PC-3 (cell line): ENCODE measurements at regions of chr1 and their contacts with region 1.

Region 1: DNA sequence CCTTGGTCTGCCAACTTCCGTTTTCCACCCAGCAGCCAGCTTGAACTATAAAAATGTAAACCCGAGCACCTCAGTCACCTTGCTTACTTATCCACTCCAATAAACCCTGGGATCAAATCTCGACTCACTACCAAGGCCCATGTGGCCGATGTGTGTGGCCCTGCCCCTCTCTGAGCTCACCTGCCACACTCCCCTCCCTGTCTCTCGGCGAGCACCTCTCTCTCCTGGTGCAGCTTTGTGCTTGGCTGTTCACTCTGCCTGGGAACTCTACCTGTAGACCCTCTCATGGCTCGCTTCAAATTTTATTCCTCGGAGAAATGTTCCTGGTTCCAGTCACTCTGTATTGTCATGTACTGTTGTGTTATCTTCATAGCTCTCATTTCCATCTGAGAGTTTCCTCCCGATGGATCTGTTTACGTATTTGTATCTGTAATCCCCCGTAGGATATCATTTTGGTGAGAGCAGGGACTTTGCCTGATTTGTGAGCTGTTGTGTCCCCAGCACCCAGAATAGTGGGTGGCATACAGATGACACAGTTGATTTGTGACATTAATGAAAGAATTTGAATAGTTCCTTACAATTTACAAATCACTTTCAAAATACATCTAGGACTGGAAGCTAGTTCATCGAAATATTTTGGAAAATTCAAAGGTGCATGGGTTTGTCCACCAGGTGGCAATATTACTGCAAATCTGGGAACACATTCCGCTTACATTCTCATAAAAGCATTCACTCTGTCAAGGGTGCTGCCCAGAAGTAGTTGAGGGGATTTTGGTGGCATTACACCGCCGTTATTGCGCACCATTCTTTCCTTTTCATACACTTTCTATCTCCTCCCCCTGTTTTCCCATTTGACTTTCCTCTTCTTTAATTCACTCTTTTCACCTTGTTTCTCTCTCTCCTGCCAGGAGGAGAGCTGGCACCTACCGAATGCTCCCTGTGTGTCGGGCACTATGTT is 95.3 kb downstream of the ABCA4 start:
- DNase-seq: peak; percentile 90
- ATAC-seq: peak; percentile 76
- H3K4me3 ChIP-seq: peak overlapping the region; percentile 79
- H3K27ac ChIP-seq: no peak overlapping the region
- H3K4me1 ChIP-seq: peaks cover 22% of the 10 kb centered on the region; the same call in 1 of the 2 replicates
- H3K27me3 ChIP-seq: no peaks in the 10 kb centered on the region
- CTCF ChIP-seq: peak; percentile 90

Region 2: GRCh38 chr1:93909146-93910050 is 116.3 kb before region 1 on chr1 and contains the start of gene GCLM:
- CTCF ChIA-PET with region 1: no interaction called
- POLR2A ChIA-PET with region 1: no interaction called
- intact Hi-C with region 1: loop called (anchors 5 kb)
- DNase-seq: peak; percentile 97
- ATAC-seq: peak; percentile 92
- H3K4me3 ChIP-seq: peak within 1 kb of the TSS; percentile 85
- H3K27ac ChIP-seq: peak within 1 kb of the TSS; percentile 70
- H3K4me1 ChIP-seq: peaks cover 33% of the 10 kb centered on the region
- H3K27me3 ChIP-seq: no peaks in the 10 kb centered on the region
- CTCF ChIP-seq: peak; percentile 78
- total RNA-seq, gene GCLM: 26.0 and 26.3 TPM in 2 replicates

Region 3: DNA sequence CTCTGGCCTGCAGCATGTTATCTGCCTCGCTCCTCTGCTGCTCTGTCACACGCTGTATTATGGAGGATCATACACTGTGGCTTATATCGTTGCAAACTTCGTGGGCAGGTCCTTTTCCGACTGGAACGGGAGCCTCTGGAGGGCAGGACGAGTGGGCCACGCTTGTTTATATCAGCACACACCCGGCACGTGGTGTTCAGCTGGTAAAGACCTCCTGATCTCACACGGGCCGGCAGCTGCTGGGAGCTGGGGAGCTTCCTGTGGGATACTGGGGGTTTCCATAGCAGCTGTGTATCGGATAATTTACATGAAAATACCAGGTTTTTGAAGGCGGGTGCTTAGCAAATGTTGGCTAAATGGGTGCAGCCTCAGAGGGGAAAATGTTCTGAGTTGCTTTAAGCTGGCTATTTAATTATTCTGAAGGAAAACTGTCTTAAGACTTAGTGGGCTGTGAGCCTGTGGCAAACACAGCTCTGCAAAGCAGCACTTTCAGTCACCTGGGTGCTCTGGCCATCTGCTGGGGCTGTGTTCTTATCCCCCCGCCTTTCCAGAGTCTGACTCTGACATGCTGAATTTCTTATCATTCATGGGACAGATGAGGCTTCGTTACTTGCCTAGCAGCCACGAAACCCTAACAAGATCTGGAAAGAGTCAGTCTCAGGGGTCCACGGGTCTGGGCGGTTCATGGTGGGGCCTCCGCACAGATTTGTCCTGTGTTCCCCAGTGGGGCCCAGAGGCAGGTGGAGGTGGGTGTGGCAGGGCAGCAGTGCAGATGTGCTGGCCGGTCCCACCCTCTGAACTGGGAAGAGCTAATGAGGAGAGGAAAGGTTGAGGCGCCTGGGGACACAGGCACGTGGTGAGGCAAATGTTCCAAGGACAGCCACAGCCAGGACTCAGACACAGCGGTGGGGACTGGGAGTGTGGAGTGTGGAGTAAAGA is 12.7 kb before region 1 on chr1:
- CTCF ChIA-PET with region 1: no interaction called
- POLR2A ChIA-PET with region 1: no interaction called
- intact Hi-C with region 1: no loop called
- DNase-seq: no peak
- ATAC-seq: no peak
- H3K4me3 ChIP-seq: no peak overlapping the region
- H3K27ac ChIP-seq: no peak overlapping the region
- H3K4me1 ChIP-seq: no peaks in the 10 kb centered on the region
- H3K27me3 ChIP-seq: no peaks in the 10 kb centered on the region
- CTCF ChIP-seq: no peak

Region 4: DNA sequence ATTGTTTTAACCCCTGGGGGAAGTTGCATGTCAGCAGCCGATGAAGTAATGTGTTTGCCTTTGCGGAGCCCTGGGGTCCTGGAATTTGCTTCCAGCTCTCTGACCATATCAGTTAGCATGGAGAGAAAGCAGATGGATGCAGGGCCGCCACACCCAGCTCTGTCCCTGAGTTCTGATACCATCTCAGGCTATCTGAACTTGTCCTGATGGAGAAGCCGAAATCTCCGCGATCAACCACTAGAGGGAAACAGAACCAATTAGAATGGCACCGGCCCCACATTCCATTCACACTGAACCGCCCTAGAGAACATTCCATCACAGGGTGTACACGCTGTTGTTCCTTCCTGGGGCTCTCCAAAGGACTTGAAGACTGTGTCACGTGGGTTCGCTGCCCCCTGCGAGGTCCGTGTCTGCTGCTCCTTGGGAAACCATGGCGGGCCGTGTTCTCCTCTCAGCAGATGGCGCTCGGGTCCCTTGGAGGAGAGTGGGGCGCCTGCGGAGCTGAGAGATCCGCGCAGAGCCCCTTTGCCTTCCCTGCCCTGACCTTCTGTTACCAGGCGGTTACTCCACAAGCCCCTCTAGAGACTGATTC is 19.9 kb after region 1 on chr1:
- CTCF ChIA-PET with region 1: no interaction called
- POLR2A ChIA-PET with region 1: no interaction called
- intact Hi-C with region 1: loop called (anchors 1 kb)
- DNase-seq: peak; percentile 94
- ATAC-seq: peak; percentile 88
- H3K4me3 ChIP-seq: no peak overlapping the region
- H3K27ac ChIP-seq: no peak overlapping the region
- H3K4me1 ChIP-seq: peaks cover 29% of the 10 kb centered on the region
- H3K27me3 ChIP-seq: no peaks in the 10 kb centered on the region
- CTCF ChIP-seq: peak; percentile 88

Region 5: GRCh38 chr1:94247138-94248094 is 221.8 kb after region 1 on chr1:
- CTCF ChIA-PET with region 1: no interaction called
- POLR2A ChIA-PET with region 1: interaction called, 15 read pairs
- intact Hi-C with region 1: no loop called
- DNase-seq: peak; percentile 92
- ATAC-seq: peak; percentile 60
- H3K4me3 ChIP-seq: peak overlapping the region; percentile 96
- H3K27ac ChIP-seq: peak overlapping the region; percentile 92
- H3K4me1 ChIP-seq: peaks cover 41% of the 10 kb centered on the region
- H3K27me3 ChIP-seq: no peaks in the 10 kb centered on the region
- CTCF ChIP-seq: no peak

Region 6: DNA sequence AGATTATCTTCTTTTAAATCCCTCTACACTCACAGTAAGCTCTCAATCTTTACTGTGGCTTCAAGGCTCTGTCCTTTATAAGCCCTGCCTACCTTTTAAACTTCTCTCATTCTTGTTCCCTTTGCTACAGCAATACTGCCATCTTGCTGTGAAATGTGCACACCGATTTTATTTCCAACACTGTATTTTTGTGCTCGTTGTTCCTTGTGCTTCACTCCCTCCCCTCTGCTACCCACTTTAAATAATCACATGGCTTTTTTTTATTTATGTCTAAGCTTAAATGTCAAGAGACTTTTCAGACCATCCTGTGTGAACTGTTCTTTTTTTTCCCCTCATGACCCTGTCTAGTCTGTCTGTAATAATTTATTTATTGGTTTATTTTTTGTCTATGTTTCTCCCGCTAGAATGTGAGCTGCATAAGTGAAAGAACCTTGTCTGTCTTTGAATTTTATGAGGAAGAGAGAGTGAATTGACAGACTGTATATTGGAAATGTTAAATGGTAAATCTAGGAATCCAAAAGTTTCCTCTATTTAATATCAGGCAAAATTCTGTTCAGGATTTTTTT is 438.2 kb after region 1 on chr1:
- CTCF ChIA-PET with region 1: interaction called, 15 read pairs
- POLR2A ChIA-PET with region 1: no interaction called
- intact Hi-C with region 1: loop called (anchors 2 kb)
- DNase-seq: peak; percentile 78
- ATAC-seq: peak; percentile 99
- H3K4me3 ChIP-seq: no peak overlapping the region
- H3K27ac ChIP-seq: no peak overlapping the region
- H3K4me1 ChIP-seq: no peaks in the 10 kb centered on the region
- H3K27me3 ChIP-seq: no peaks in the 10 kb centered on the region
- CTCF ChIP-seq: peak; percentile 87

Region 7: GRCh38 chr1:94805912-94806311 is 780.2 kb after region 1 on chr1:
- CTCF ChIA-PET with region 1: no interaction called
- POLR2A ChIA-PET with region 1: no interaction called
- intact Hi-C with region 1: loop called (anchors 10 kb)
- DNase-seq: peak; percentile 77
- ATAC-seq: peak; percentile 36; the same call in 1 of the 2 replicates
- H3K4me3 ChIP-seq: no peak overlapping the region
- H3K27ac ChIP-seq: no peak overlapping the region
- H3K4me1 ChIP-seq: peaks cover 6% of the 10 kb centered on the region
- H3K27me3 ChIP-seq: no peaks in the 10 kb centered on the region
- CTCF ChIP-seq: peak; percentile 92